GM12878 (cell line): ENCODE measurements at regions of chr10 and their contacts with region 1.

Region 1: DNA sequence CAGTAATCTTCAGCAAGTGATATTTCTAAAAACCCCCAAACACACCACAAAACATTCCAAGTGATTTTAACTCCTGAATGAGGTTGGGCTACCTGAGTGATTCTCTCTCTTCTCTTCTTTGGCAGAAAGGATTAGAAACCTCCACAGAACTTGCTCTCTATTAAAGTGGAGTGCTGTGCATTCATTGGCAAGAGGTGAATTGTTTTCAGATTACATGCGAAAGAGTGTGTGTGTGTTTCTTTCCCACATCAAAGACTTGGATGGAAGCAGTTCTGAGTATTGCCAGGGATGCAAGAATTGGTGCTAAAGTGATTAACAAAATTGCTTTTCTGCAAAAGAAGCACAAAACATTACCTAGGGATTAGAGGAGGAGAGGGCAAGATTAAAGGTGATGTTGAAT is 13.1 kb upstream of the FBXW4 start:
- DNase-seq: no peak
- ATAC-seq: no peak
- H3K4me3 ChIP-seq: no peak overlapping the region
- H3K27ac ChIP-seq: no peak overlapping the region
- H3K4me1 ChIP-seq: peaks cover 8% of the 10 kb centered on the region
- H3K27me3 ChIP-seq: no peaks in the 10 kb centered on the region
- CTCF ChIP-seq: no peak
- EP300 ChIP-seq: no peak
- POLR2A ChIP-seq: no peak
- RAD21 ChIP-seq: no peak

Region 2: GRCh38 chr10:101301249-101301711 is 406.8 kb before region 1 on chr10:
- CTCF ChIA-PET with region 1: no interaction called
- POLR2A ChIA-PET with region 1: no interaction called
- RAD21 ChIA-PET with region 1: no interaction called
- SMC1A ChIA-PET with region 1: no interaction called
- in situ Hi-C with region 1: no loop called
- intact Hi-C with region 1: no loop called
- DNase-seq: no peak
- ATAC-seq: peak; percentile 83
- H3K4me3 ChIP-seq: no peak overlapping the region
- H3K27ac ChIP-seq: no peak overlapping the region
- H3K4me1 ChIP-seq: no peaks in the 10 kb centered on the region
- H3K27me3 ChIP-seq: peaks cover 0 to 3% of the 10 kb centered on the region in 2 experiments; a peak in 2 of 4 replicates
- CTCF ChIP-seq: peak; percentile 29 to 57 (median 53); a peak in 4 of 6 replicates
- EP300 ChIP-seq: no peak
- POLR2A ChIP-seq: no peak
- RAD21 ChIP-seq: peak; percentile 47

Region 3: DNA sequence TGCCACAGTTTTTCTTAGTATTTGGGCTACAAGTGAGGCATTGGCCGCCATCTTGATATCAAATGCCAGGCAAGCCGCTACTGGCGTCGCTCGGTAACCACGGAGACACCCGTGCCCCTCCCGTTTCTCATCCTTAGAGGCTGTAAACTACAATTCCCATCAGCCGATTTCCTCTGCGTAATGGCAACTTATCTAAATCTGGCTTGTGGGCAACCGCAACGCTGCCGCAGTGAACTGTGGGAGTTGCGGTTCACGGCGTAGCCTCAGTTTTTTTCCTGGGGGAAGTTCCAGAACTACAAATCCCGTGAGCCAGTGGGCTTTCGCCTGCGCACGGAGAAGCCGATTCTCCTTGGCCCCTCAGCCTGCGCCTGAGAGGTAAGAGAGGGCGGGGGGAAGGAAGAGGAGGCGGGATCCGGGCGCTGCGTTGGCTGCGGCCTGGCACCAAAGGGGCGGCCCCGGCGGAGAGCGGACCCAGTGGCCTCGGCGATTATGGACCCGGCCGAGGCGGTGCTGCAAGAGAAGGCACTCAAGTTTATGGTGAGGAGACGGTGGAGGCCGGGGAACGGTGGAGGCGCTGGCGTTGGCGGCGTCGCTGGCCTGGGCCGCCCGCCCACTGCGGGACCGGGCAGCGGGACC is 354.3 kb before region 1 on chr10 and contains the start of gene BTRC:
- CTCF ChIA-PET with region 1: no interaction called
- POLR2A ChIA-PET with region 1: no interaction called
- RAD21 ChIA-PET with region 1: no interaction called
- SMC1A ChIA-PET with region 1: no interaction called
- in situ Hi-C with region 1: no loop called
- intact Hi-C with region 1: no loop called
- DNase-seq: peak; percentile 98
- ATAC-seq: peak; percentile 98
- H3K4me3 ChIP-seq: peak within 1 kb of the TSS; percentile 82
- H3K27ac ChIP-seq: peak within 1 kb of the TSS; percentile 51
- H3K4me1 ChIP-seq: 0 out of 2 replicates have a peak, but pooled peaks cover 3% of the 10 kb centered on the region
- H3K27me3 ChIP-seq: no peaks in the 10 kb centered on the region
- CTCF ChIP-seq: no peak
- EP300 ChIP-seq: peak in 1 of 2 experiments; percentile 93; a peak in 2 of 4 replicates
- POLR2A ChIP-seq: peak; percentile 79
- RAD21 ChIP-seq: no peak
- polyA plus RNA-seq, gene BTRC: 2.2 to 3.2 TPM

Region 4: DNA sequence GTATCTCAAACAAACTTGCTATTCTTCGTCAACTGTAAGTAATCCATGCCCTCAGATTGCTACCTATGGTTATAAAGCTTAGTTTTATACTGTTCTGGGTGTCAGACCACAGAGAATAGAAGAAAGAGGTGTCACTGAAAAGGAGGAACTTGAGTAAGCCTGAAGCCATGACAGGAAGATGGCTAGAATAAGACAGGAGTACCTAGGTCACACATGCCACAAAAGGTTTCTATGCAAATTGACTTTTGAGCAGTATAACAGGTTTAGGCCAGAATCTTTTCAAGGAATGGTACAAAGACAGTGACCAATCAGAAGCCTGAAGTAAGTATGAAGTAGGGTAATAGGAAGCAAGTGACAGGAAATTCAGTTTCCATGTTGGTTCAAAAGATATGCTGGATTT is 36.6 kb before region 1 on chr10:
- CTCF ChIA-PET with region 1: interaction called, 7 read pairs
- POLR2A ChIA-PET with region 1: no interaction called
- RAD21 ChIA-PET with region 1: interaction called, 13 read pairs
- SMC1A ChIA-PET with region 1: interaction called, 8 read pairs
- in situ Hi-C with region 1: no loop called
- intact Hi-C with region 1: no loop called
- DNase-seq: peak; percentile 60
- ATAC-seq: peak; percentile 91
- H3K4me3 ChIP-seq: no peak overlapping the region
- H3K27ac ChIP-seq: peak overlapping the region; percentile 78
- H3K4me1 ChIP-seq: peaks cover 26% of the 10 kb centered on the region
- H3K27me3 ChIP-seq: no peaks in the 10 kb centered on the region
- CTCF ChIP-seq: no peak
- EP300 ChIP-seq: no peak
- POLR2A ChIP-seq: no peak
- RAD21 ChIP-seq: no peak

Region 5: DNA sequence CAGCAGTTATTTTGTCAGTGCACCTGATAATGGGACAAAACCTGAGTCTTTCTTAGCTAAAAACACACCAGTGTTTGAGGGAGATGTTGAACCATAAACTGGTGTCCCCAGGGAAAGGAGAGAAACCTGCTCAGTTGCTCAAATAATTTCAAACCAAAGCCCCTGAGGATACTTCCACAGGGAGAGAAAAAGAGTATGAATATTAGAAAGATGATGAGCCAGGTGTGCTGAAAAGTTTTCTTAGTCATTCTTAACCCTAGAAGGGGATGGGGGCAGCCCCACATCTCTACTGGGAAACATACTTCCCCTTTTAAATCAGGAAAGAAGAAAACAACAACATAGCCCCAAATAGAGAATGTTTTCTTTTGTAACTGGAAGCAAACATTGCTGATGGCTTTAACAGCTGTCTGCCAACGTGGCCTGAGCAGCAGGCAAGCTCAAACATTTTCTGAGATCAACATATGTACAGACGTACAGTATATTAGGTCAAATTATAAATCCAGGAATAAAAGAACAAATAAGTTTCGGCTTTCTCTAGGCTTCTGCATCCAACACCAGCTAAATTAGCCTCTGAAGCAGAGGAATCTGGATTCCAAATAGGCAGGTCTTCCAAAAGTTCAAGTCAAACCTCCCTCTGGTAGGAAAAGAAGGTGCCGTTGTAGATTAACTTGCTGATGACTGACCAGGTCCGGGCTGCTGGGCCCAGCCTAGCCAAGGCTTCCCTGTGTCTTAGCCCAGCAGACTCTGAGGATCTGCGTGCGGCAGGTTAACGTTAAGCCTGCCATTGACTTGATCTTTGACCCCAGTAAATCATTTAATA is 17.4 kb after region 1 on chr10:
- CTCF ChIA-PET with region 1: interaction called, 4 read pairs
- POLR2A ChIA-PET with region 1: interaction called, 3 read pairs
- RAD21 ChIA-PET with region 1: interaction called, 4 read pairs
- SMC1A ChIA-PET with region 1: interaction called, 10 read pairs
- in situ Hi-C with region 1: no loop called
- intact Hi-C with region 1: no loop called
- DNase-seq: no peak
- ATAC-seq: peak; percentile 74
- H3K4me3 ChIP-seq: no peak overlapping the region
- H3K27ac ChIP-seq: peak overlapping the region; percentile 22
- H3K4me1 ChIP-seq: peaks cover 12% of the 10 kb centered on the region
- H3K27me3 ChIP-seq: no peaks in the 10 kb centered on the region
- CTCF ChIP-seq: no peak
- EP300 ChIP-seq: no peak
- POLR2A ChIP-seq: no peak
- RAD21 ChIP-seq: no peak